ENCODE measurements at regions of chr19 and their contacts with region 1.

Region 1: DNA sequence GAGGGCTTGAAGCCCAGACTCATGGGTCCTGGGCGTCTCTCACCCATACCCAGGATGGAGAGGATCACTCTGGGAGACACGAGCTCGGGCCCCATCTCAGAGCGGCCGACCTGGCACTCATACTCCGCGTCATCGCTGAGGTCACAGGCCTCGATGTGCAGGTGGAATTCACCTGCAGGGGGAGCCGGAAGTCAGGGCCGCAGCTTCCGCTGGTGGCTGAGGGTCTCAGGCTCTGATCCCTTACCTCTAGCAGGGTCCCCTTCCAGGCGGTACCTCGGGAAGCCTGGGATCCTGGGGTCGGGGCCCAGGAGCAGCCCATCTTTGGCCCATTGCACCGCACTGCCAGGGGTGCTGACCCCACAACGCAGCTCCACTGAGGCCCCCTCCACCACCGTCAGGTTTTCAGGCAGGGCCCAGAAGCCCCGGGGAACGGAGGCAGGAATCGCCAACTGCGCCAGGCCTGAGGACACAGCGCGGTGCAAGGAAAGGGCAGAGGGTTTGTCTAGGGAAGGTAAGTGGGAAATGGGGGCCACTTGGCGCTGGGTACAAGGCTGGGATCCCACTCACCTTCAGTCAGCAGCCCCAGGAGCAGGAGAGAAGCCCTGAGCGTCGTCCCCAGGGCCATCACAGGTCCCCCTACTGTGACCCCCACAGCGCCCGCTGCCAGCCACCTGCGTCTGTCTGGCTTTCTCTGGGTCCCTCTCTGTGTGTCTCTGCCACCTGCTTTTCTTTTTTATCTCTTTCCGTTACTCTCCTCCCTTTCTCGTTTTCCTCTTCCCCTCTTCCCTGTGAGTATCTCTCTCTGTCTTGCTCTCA is 883 bp downstream of the NPHS1 start:
- DNase-seq: no peak
- ATAC-seq: no peak
- H3K4me3 ChIP-seq: no peak overlapping the region
- H3K27ac ChIP-seq: no peak overlapping the region
- H3K4me1 ChIP-seq: no peaks in the 10 kb centered on the region
- H3K27me3 ChIP-seq: peaks cover 68% of the 10 kb centered on the region
- CTCF ChIP-seq: no peak
- POLR2A ChIP-seq: no peak
- RAD21 ChIP-seq: no peak

Region 2: GRCh38 chr19:35783469-35784434 is 67.7 kb before region 1 on chr19:
- CTCF ChIA-PET with region 1: no interaction called
- POLR2A ChIA-PET with region 1: no interaction called
- dilution Hi-C with region 1: no loop called
- in situ Hi-C with region 1: no loop called
- intact Hi-C with region 1: no loop called
- DNase-seq: no peak
- ATAC-seq: no peak
- H3K4me3 ChIP-seq: no peak overlapping the region
- H3K27ac ChIP-seq: no peak overlapping the region
- H3K4me1 ChIP-seq: no peaks in the 10 kb centered on the region
- H3K27me3 ChIP-seq: no peaks in the 10 kb centered on the region
- CTCF ChIP-seq: no peak
- POLR2A ChIP-seq: no peak
- RAD21 ChIP-seq: no peak

Region 3: GRCh38 chr19:35801828-35802227 is 49.6 kb before region 1 on chr19:
- CTCF ChIA-PET with region 1: no interaction called
- POLR2A ChIA-PET with region 1: no interaction called
- dilution Hi-C with region 1: no loop called
- in situ Hi-C with region 1: no loop called
- intact Hi-C with region 1: loop called (anchors 2 kb)
- DNase-seq: no peak
- ATAC-seq: no peak
- H3K4me3 ChIP-seq: no peak overlapping the region
- H3K27ac ChIP-seq: no peak overlapping the region
- H3K4me1 ChIP-seq: no peaks in the 10 kb centered on the region
- H3K27me3 ChIP-seq: peaks cover 26% of the 10 kb centered on the region
- CTCF ChIP-seq: no peak
- POLR2A ChIP-seq: no peak
- RAD21 ChIP-seq: no peak

Measured in IMR-90 (cell line).